AG04450 (cell line): ENCODE measurements at regions of chr4 and their contacts with region 1.

Region 1: DNA sequence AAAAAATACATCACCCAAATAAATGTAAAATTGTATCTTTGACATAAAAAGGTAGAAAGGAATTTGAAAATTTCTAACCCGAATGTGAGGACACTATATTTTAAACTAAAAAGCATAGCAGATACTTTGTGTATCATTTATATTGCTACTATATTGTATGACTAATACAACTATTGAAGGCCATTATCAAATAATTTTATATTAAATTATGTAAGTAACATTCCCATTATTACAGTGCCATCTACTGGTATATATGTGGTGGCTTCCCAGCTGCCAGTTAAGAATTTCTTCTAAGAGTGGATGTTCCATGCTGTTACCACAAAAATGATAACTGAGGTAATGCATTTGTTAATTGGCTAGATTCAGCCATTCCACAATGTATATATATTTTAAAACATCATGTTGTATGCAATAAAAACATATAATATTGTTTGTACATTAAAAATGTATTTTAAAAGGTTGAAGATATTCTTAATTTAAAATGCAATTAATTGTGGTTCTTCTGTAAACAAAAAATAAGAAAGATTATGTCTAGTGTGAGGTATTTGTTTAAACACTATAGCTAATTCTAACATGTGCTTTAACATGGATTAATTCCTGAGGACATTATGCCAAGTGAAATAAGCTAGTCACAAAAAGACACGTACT is 65.3 kb downstream of the EGF start:
- DNase-seq: no peak
- H3K4me3 ChIP-seq: no peak overlapping the region
- H3K27ac ChIP-seq: no peak overlapping the region
- H3K27me3 ChIP-seq: no peaks in the 10 kb centered on the region
- CTCF ChIP-seq: peak; percentile 65

Region 2: DNA sequence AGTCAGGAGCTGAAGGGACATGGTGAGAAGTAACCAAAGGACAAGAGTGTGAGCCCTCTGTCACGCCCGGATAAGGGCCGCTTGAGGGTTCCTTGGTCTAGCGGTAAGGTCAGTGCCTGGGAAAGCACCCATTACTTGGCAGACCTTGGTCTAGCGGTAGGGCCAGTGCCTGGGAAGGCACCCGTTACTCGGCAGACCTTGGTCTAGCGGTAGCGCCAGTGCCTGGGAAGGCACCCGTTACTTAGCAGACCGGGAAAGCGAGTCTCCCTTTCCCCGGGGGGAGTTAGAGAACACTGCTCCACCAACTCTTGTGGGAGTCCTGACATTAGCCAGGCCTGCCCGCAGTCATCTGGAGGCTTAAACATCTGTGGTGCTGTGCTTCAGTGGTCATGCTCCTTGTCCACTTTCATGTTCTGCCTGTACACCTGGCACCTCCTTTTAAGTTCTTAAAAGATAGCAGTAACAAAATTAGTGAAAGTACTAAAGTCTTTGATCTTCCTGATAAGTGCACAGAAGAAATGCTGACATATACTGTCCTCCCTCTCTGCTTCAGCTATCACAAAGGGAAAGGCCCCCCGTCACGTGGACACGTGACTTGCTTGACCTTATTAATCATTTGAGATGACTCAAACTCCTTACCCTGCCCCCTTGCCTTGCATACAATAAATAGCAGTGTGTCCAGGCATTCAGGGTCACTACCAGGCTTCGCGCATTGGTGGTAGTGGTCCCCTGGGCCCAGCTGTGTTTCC is 553.7 kb before region 1 on chr4:
- CTCF ChIA-PET with region 1: interaction called, 64 read pairs
- POLR2A ChIA-PET with region 1: no interaction called
- DNase-seq: no peak
- H3K4me3 ChIP-seq: no peak overlapping the region
- H3K27ac ChIP-seq: no peak overlapping the region
- H3K27me3 ChIP-seq: no peaks in the 10 kb centered on the region
- CTCF ChIP-seq: no peak

Region 3: GRCh38 chr4:110139815-110140214 is 161.8 kb after region 1 on chr4:
- CTCF ChIA-PET with region 1: no interaction called
- POLR2A ChIA-PET with region 1: no interaction called
- DNase-seq: no peak
- H3K4me3 ChIP-seq: no peak overlapping the region
- H3K27ac ChIP-seq: no peak overlapping the region
- H3K27me3 ChIP-seq: no peaks in the 10 kb centered on the region
- CTCF ChIP-seq: no peak